KBM-7 (cell line): ENCODE measurements at regions of chr2 and their contacts with region 1.

Region 1: DNA sequence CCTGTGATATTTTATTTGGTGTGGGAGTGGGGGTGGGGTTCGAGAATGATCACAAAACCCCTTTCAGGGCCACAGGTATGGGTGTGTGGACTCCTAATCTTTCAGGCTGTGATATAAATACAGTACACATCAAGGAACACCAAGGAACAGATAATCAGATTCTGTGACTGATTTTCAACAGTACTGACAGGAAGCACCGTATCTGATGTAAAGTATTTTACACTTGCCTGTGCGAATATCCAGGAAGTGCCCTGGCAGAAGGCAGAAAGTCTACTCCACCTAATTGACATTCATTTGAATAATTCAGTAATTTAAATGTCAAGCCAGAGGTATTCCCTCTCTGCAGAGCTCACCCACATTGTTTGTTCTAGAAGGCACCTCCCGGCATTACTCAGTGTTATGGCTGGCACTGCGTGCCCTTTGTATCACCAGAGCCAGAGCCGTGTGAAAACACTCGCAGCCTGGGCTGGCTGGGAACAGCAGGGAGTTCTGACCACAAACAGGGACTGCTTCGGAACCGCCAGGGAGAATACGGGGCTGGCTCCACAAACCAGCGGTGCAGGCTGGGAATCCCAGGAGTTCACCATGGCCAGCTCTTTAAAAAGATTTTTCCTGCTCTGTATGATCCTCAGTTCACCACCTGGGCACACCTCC is 91.8 kb downstream of the ACVR1 start:
- DNase-seq: no peak

Region 2: DNA sequence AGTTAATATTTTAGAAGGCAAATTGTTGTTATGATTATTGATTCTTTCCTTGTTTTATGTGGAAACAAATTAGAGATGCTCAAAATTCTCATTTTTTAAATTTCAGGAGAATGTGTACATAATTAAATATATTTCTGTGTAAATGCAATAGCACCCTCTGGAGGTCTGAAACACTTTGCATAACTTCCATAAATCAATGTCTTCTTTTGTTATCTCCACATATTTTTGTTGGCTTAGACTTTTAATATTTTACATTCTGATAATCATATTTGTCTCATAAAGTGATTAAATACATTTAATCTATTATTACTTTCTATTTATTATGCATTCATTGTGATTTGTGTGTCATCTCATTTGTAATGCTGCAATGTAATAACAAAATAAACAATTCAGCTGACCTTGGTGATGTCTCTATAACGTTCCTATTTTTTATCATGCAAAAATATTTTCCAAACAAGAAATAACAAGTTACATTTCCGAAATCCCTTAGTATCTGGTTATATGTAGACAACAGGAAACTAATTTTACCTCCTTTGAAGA is 728.6 kb before region 1 on chr2:
- in situ Hi-C with region 1: no loop called
- DNase-seq: peak; percentile 5

Region 3: GRCh38 chr2:157269922-157270321 is 514.4 kb before region 1 on chr2:
- in situ Hi-C with region 1: no loop called
- DNase-seq: peak; percentile 82

Region 4: GRCh38 chr2:157492189-157492773 is 292.0 kb before region 1 on chr2:
- in situ Hi-C with region 1: no loop called
- DNase-seq: peak; percentile 73

Region 5: DNA sequence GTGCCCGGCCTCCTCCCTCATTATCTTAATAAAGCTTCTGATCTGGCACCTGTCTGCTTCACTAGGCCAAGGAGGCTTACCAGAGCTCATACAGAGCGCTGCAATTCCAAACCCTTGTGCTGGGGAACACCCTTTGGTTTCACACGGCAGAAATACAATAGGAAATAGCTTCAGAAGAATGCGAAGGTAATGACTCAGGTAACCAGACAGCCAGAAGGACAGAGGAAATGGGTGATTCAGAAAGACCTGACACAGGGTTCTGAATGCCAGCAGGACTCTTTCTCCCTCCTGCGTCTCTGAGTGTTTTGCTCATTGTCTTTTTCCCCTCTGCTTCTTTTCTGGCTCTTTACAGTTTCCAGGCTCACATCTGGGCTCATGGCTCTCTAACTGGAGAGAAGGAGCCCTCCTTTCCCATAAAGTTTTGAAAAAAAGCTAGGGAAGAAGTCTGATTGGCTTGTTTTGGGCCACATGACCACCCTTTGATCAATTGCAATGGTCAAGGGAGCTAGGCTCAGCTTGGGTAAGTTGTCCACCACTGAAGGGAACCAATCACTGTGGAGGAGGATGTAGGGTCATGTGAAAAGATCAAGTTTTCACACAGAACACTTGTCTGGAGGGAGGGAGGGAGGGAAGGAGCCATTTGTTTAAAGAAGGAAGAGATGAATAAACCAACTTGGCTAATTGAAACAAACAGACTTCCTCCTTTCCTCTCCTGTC is 226.9 kb after region 1 on chr2:
- in situ Hi-C with region 1: loop called (anchors 10 kb)
- DNase-seq: no peak